Activated CD8-positive, alpha-beta T cell treated with anti-CD3 and anti-CD28 coated beads, Interleukin-2, amount 10 ng/mL, durations not matched to agents 7 days and 5 days (primary cell): ENCODE measurements at regions of chr17 and their contacts with region 1.

Region 1: GRCh38 chr17:30336369-30337171 is 2.7 kb upstream of the TMIGD1 start:
- DNase-seq: peak; percentile 78
- ATAC-seq: peak; percentile 56
- H3K4me3 Mint-ChIP-seq: no peak overlapping the region
- H3K27ac Mint-ChIP-seq: no peak overlapping the region
- H3K4me1 Mint-ChIP-seq: peaks cover 36% of the 10 kb centered on the region
- H3K27me3 Mint-ChIP-seq: peaks cover 2% of the 10 kb centered on the region

Region 2: GRCh38 chr17:30116661-30117551 is 219.7 kb before region 1 on chr17 and contains the start of gene NSRP1:
- CTCF ChIA-PET with region 1: interaction called, 20 read pairs
- POLR2A ChIA-PET with region 1: no interaction called
- DNase-seq: peak; percentile 97
- ATAC-seq: peak; percentile 92
- H3K4me3 Mint-ChIP-seq: peak within 1 kb of the TSS; percentile 95
- H3K27ac Mint-ChIP-seq: peak within 1 kb of the TSS; percentile 99
- H3K4me1 Mint-ChIP-seq: peaks cover 61% of the 10 kb centered on the region
- H3K27me3 Mint-ChIP-seq: no peaks in the 10 kb centered on the region
- total RNA-seq, gene NSRP1: 19.6 to 21.3 TPM

Region 3: DNA sequence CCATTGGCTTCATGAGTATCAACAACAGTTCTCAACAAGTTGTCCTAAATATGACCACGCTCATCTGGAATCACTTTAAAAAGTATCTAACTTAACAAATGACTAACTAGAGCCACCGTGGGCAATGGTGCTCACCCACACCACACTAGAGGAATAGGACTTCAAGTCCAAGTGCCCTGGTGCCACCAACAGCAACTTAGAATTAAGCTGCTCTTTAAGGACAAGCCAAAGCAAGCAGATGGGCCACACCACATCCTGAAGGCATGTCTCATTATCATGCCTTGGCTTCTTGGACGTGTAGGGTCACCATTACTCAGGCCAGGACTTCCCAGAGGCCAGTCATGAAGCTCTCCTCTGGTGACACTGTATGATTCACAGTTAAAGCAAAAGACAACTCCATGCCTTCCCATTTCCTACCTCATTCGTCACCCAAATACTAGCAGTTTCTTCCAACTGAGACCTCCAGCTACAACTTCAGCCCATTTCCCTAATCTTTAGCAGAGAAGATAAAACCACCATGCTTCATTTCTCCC is 91.7 kb before region 1 on chr17:
- CTCF ChIA-PET with region 1: interaction called, 12 read pairs
- POLR2A ChIA-PET with region 1: no interaction called
- DNase-seq: no peak
- ATAC-seq: no peak
- H3K4me3 Mint-ChIP-seq: no peak overlapping the region
- H3K27ac Mint-ChIP-seq: no peak overlapping the region
- H3K4me1 Mint-ChIP-seq: no peaks in the 10 kb centered on the region
- H3K27me3 Mint-ChIP-seq: peaks cover 7% of the 10 kb centered on the region

Region 4: GRCh38 chr17:30291543-30292285 is 44.9 kb before region 1 on chr17 and contains the start of gene BLMH:
- CTCF ChIA-PET with region 1: interaction called, 38 read pairs
- POLR2A ChIA-PET with region 1: interaction called, 3 read pairs
- DNase-seq: peak; percentile 85
- ATAC-seq: peak; percentile 91
- H3K4me3 Mint-ChIP-seq: peak within 1 kb of the TSS; percentile 91
- H3K27ac Mint-ChIP-seq: peak within 1 kb of the TSS; percentile 84
- H3K4me1 Mint-ChIP-seq: peaks cover 20% of the 10 kb centered on the region
- H3K27me3 Mint-ChIP-seq: no peaks in the 10 kb centered on the region
- total RNA-seq, gene BLMH: 57.9 to 61.1 TPM

Region 5: DNA sequence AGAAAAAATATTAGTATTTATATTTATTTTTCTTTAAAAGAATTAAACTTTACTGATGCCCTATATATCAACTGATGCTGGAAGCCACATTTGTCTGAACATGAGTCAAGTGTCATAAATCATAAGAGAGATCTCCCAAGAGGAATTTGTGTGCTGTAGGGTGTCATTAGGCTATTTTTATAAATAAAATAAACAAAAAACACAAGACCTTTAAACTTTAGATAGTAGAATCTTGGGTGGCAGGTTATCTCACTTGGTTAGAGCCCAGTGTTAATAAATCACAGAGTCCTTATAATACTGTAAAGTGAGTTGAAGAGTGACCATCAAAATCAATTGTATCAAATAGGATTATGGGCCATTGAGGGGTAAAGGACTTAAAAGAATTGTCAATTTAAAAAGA is 20.9 kb after region 1 on chr17:
- CTCF ChIA-PET with region 1: interaction called, 10 read pairs
- POLR2A ChIA-PET with region 1: no interaction called
- DNase-seq: no peak
- ATAC-seq: no peak
- H3K4me3 Mint-ChIP-seq: no peak overlapping the region
- H3K27ac Mint-ChIP-seq: no peak overlapping the region
- H3K4me1 Mint-ChIP-seq: peaks cover 3% of the 10 kb centered on the region
- H3K27me3 Mint-ChIP-seq: peaks cover 2% of the 10 kb centered on the region

Region 6: DNA sequence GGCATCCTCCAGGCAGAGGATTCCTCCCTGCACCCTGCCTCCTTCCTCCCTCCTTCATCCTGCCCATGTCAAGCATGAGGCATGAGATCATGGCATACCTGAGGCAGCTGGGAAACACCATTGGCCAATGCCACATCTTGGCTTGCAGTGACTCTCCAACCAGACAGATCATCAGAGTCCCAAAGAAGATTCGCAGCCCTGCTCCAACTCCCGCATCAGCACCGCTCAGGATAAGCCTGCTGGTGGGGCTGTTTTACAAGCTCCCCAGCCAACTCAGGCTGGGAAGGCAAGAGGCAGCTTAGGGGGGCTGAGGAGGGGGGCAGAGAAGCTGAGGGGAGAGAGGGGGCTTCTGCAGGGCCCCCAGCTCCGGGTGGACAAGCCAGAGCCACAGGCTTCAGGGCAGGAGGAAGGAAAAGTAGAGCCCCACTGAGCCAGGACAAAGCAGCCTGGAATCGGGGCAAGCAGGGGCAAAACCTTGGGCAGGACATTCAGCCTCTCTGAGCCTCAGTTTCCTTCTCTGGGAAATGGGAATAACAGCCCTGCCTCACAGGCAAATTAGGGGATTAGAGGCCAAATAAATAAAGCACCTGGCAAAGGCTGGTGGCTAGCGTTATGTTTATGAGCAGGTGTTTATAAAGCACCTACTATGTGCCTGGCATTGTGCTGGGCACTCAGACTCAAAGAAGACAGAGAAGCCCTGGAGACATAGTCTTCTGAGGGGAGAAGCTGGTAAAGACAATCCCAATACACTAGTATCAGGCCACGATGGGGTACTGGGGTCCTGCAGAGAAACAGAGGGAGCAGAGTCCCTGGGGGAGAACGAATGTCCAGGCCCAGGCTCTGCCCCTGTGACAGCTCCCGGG is 228.7 kb after region 1 on chr17:
- CTCF ChIA-PET with region 1: no interaction called
- POLR2A ChIA-PET with region 1: no interaction called
- DNase-seq: no peak
- ATAC-seq: no peak
- H3K4me3 Mint-ChIP-seq: no peak overlapping the region
- H3K27ac Mint-ChIP-seq: no peak overlapping the region
- H3K4me1 Mint-ChIP-seq: peaks cover 4% of the 10 kb centered on the region
- H3K27me3 Mint-ChIP-seq: peaks cover 18% of the 10 kb centered on the region